ENCODE measurements at regions of chr18 and their contacts with region 1.

Region 1: DNA sequence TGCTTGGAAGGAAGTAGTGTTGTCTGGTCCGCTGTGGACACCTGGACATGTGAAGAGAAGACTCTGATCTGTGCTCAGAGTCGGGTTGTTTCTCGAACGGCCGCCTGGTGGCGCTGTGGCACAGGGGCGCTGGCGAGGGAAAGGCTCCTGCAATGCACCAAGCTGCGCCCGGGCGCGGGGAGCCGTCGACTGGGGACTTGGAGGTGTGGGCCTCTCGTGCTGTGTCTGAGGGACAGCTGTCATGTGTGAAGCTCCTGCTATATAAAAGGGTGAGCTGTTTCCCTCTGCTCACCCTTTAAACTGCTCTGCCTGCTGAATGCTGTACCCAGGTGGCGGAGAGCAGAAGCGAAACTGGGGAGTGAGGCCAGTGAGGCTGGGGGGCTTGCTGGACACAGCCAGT is 44.0 kb downstream of the GNAL start:
- DNase-seq: peak; percentile 90
- ATAC-seq: peak; percentile 91
- H3K4me3 Mint-ChIP-seq: no peak overlapping the region
- H3K27ac Mint-ChIP-seq: no peak overlapping the region
- H3K4me1 Mint-ChIP-seq: peaks cover 11% of the 10 kb centered on the region
- H3K27me3 Mint-ChIP-seq: peaks cover 3% of the 10 kb centered on the region; the same call in 1 of the 2 replicates
- CTCF ChIP-seq: peak; percentile 99

Region 2: GRCh38 chr18:11669271-11669947 is 63.6 kb before region 1 on chr18:
- CTCF ChIA-PET with region 1: interaction called, 14 read pairs
- POLR2A ChIA-PET with region 1: no interaction called
- DNase-seq: no peak
- ATAC-seq: no peak; the same call in 1 of the 2 replicates
- H3K4me3 Mint-ChIP-seq: no peak overlapping the region
- H3K27ac Mint-ChIP-seq: no peak overlapping the region
- H3K4me1 Mint-ChIP-seq: peaks cover 37% of the 10 kb centered on the region
- H3K27me3 Mint-ChIP-seq: peaks cover 8% of the 10 kb centered on the region
- CTCF ChIP-seq: no peak

Region 3: DNA sequence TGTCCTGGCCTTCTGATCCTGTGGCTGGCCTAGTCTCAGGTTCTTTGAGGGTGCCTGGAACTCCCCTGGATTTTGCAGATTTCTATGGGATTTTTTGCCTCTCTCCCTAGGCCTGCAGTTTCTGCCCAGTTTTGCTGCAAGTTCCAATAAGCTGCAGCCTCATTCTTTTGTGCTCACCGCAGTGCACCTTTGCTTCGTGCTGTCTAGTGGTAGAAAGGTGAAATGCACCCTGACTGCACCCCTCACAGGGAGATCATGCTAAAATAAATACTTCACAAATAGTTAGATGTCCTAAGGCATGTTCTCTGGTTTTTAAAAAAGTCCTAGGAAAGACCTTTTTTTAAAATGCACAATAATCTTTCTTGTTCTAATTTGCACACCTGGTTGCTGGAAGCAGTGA is 28.5 kb after region 1 on chr18:
- CTCF ChIA-PET with region 1: interaction called, 14 read pairs
- POLR2A ChIA-PET with region 1: no interaction called
- DNase-seq: no peak
- ATAC-seq: peak; percentile 92
- H3K4me3 Mint-ChIP-seq: no peak overlapping the region
- H3K27ac Mint-ChIP-seq: peak overlapping the region; percentile 92
- H3K4me1 Mint-ChIP-seq: peaks cover 23% of the 10 kb centered on the region
- H3K27me3 Mint-ChIP-seq: no peaks in the 10 kb centered on the region
- CTCF ChIP-seq: peak; percentile 41

Region 4: GRCh38 chr18:11840493-11840892 is 107.5 kb after region 1 on chr18:
- CTCF ChIA-PET with region 1: interaction called, 10 read pairs
- POLR2A ChIA-PET with region 1: no interaction called
- DNase-seq: no peak
- ATAC-seq: peak; percentile 68
- H3K4me3 Mint-ChIP-seq: no peak overlapping the region
- H3K27ac Mint-ChIP-seq: peak overlapping the region; percentile 2
- H3K4me1 Mint-ChIP-seq: peaks cover 7% of the 10 kb centered on the region
- H3K27me3 Mint-ChIP-seq: no peaks in the 10 kb centered on the region
- CTCF ChIP-seq: no peak